ENCODE measurements at regions of chr19 and their contacts with region 1.

Region 1: DNA sequence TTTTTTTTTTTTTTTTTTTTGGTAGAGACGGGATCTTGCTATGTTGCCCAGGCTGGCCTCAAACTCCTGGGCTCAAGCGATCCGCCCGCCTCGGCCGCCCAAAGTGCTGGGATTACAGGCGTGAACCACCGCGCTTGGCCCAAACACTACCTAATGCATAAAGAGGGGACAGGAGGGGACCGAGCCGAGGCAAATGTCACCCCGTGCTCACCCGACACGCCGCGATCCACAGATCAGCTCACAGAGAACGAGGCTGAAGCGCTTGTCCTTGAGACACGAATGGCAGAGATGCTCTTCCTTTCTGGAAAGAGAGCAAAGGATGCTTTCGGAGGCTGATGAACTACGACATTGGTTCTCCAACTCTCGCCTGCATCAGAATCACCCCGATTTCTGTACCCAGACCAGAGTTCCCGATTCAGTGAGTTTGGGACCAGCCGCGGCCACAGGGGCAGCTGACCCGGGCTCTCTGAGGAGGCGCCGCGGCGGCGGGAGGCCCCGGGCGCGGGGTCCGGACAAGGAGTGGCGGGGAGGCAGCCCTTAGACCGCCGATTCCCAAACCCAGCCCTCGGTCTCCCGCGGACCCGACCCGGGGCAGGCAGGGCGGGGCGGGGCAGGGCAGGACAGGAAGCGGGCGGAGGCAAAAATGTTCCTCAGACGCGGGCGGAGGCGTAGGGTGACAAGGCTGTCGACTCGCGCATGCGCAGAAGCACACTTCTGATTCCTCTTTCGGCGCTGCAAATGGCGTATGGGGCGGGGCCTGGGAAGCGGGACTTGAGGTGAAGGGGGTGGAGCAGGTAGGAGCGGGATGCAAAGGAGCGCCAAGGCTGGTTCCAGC is at the start of gene ZNF699:
- DNase-seq: peak; percentile 98
- H3K4me3 Mint-ChIP-seq: peak within 1 kb of the TSS; percentile 79
- H3K27ac Mint-ChIP-seq: peak within 1 kb of the TSS; percentile 89
- H3K4me1 Mint-ChIP-seq: peaks cover 12% of the 10 kb centered on the region
- H3K27me3 Mint-ChIP-seq: no peaks in the 10 kb centered on the region
- total RNA-seq, gene ZNF699: 4.4 and 5.2 TPM in 2 replicates

Region 2: DNA sequence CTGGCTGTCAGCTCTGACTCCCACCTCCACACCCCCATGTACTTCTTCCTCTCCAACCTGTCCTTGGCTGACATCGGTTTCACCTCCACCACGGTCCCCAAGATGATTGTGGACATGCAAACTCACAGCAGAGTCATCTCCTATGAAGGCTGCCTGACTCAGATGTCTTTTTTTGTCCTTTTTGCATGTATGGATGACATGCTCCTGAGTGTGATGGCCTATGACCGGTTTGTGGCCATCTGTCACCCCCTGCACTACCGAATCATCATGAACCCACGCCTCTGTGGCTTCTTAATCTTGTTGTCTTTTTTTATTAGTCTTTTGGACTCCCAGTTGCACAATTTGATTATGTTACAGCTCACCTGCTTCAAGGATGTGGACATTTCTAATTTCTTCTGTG is 58.1 kb before region 1 on chr19:
- intact Hi-C with region 1: no loop called
- DNase-seq: no peak
- H3K4me3 Mint-ChIP-seq: no peak overlapping the region
- H3K27ac Mint-ChIP-seq: no peak overlapping the region
- H3K4me1 Mint-ChIP-seq: no peaks in the 10 kb centered on the region
- H3K27me3 Mint-ChIP-seq: no peaks in the 10 kb centered on the region

Region 3: GRCh38 chr19:9323919-9324583 is 14.7 kb after region 1 on chr19 and contains the start of gene ZNF559:
- intact Hi-C with region 1: loop called (anchors 1 kb)
- DNase-seq: peak; percentile 94
- H3K4me3 Mint-ChIP-seq: peak within 1 kb of the TSS; percentile 86
- H3K27ac Mint-ChIP-seq: peak within 1 kb of the TSS; percentile 88
- H3K4me1 Mint-ChIP-seq: peaks cover 12% of the 10 kb centered on the region
- H3K27me3 Mint-ChIP-seq: no peaks in the 10 kb centered on the region
- total RNA-seq, gene ZNF559: 8.2 and 8.4 TPM in 2 replicates

Region 4: DNA sequence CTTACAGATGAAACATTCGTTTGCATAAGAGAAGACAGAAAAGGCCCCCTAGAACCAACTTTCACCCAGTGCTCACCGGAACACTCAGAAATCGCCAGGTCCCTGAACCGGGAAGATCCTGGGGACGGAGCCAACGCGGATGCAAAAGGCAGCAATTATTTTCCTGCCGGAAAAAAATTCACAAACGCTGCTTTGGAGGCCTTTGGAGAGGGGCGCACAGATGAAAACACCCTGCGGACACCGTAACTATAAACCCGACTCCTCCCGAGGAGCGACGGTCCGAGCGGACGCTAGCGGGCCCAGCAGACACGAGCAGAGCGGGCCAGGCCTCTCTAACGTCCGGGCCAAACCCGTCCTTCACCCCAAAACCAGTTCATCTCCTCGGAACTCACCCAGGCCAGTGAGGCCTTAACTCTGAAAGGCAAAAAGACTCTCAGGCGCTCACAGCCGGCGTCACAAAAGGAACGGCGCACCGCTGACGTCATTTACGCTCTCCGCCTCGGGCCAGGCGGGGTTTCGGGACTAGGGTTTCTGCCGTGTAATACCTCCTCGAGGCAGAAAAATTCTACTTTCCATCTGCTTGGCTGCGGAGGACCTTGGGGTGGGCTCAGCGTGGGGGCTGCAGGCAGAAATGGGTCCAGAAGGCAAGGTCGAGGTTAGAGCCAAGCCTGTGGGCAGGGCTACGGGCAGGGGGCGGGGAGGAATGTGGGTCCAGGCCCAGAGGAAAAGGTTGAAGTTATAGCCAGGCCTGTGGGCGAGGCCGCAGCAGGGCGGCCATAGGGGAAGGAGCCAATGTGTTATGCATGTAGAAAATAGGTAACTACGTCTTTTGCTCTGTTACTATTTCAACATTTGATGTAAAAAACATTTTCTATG is 229.1 kb after region 1 on chr19 and contains the start of gene ZNF426:
- intact Hi-C with region 1: loop called (anchors 1 kb)
- DNase-seq: peak; percentile 76
- H3K4me3 Mint-ChIP-seq: peak within 1 kb of the TSS; percentile 93
- H3K27ac Mint-ChIP-seq: peak within 1 kb of the TSS; percentile 95
- H3K4me1 Mint-ChIP-seq: peaks cover 5% of the 10 kb centered on the region
- H3K27me3 Mint-ChIP-seq: no peaks in the 10 kb centered on the region
- total RNA-seq, gene ZNF426: 10.4 and 10.5 TPM in 2 replicates

Measured in activated T-helper 2 cell treated with anti-CD3 and anti-CD28 coated beads, Interferon-gamma antibody, Interleukin-2, Interleukin-4, amounts not matched to agents 10 μg/mL and 5 μg/mL and 100 μg/mL, durations not matched to agents 14 hours and 24 hours and 36 hours (primary cell).